ENCODE measurements at regions of chr9 and their contacts with region 1.

Region 1: GRCh38 chr9:2837915-2838314 is 6.0 kb downstream of the PUM3 start:
- DNase-seq: no peak
- H3K4me3 Mint-ChIP-seq: peak overlapping the region; percentile 63
- H3K27ac Mint-ChIP-seq: peak overlapping the region; percentile 84
- H3K4me1 Mint-ChIP-seq: peaks cover 24% of the 10 kb centered on the region
- H3K27me3 Mint-ChIP-seq: no peaks in the 10 kb centered on the region
- CTCF ChIP-seq: peak; percentile 35

Region 2: DNA sequence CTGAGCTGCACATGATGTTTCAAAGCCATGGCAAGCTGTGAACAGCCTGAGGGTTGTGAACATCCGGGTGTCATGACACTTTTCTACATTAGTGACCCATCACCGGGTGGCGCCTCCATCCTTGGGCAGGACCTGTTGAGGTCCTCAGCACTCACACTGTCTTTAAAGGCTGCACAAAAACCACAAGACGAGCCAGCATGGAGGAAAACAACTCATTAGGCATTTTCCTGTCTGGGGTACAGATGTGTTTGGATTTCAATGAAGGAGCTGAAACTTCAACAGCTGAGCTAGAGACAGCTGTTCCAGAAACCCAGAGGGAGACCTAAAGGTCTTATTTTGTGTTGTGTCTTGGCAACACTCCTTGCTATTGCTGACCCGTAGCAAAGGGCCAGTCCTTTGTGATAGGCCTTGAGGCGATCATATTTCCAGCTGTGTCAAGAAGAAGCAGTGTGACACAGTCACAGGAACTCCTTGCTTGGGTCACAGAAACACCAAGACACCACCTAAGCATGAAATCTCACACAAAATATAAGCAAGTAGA is 368.2 kb before region 1 on chr9:
- CTCF ChIA-PET with region 1: no interaction called
- POLR2A ChIA-PET with region 1: no interaction called
- intact Hi-C with region 1: loop called (anchors 1 kb)
- DNase-seq: peak; percentile 22
- H3K4me3 Mint-ChIP-seq: no peak overlapping the region
- H3K27ac Mint-ChIP-seq: no peak overlapping the region
- H3K4me1 Mint-ChIP-seq: no peaks in the 10 kb centered on the region
- H3K27me3 Mint-ChIP-seq: no peaks in the 10 kb centered on the region
- CTCF ChIP-seq: peak; percentile 13